Activated naive CD4-positive, alpha-beta T cell treated with anti-CD3 and anti-CD28 coated beads, Interleukin-2, amount 10 ng/mL, durations not matched to agents 7 days and 5 days (primary cell): ENCODE measurements at regions of chr13 and their contacts with region 1.

Region 1: GRCh38 chr13:26929971-26930730 is 169.6 kb upstream of the GPR12 start:
- DNase-seq: peak; percentile 75
- H3K4me3 Mint-ChIP-seq: no peak overlapping the region
- H3K27ac Mint-ChIP-seq: no peak overlapping the region
- H3K4me1 Mint-ChIP-seq: no peaks in the 10 kb centered on the region
- H3K27me3 Mint-ChIP-seq: peaks cover 17% of the 10 kb centered on the region

Region 2: DNA sequence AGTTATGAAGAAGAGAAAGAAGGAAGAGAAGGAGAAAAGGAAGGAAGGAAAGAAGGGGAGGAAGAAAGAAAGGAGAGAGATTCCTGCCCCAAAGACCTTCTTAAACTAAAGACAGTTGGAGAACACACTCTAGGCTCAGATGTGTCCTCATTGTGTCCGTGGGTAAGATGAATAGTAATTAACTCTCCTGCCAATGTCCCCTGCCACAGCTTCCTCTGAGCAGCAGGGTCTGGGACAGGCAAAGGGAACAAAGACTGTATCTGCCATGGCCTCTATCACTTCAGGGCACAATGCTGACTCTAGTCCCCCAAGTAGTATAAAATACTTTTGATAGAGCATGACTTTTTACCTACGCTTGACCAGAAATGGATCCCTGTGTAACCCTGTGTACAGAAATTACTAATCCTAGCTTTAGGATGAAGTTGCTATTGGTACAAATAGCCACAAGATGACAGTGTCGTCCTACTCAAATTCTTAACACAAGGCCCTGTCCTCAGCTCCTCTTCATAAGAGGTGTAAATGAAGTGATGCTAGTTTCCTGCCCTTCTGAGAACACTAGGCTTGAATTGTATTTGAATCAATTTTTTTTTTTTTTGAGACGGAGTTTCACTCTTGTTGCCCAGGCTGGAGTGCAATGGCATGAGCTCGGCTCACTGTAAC is 16.7 kb after region 1 on chr13:
- CTCF ChIA-PET with region 1: interaction called, 11 read pairs
- DNase-seq: no peak
- H3K4me3 Mint-ChIP-seq: no peak overlapping the region
- H3K27ac Mint-ChIP-seq: no peak overlapping the region
- H3K4me1 Mint-ChIP-seq: no peaks in the 10 kb centered on the region
- H3K27me3 Mint-ChIP-seq: peaks cover 4% of the 10 kb centered on the region